ENCODE measurements at regions of chr17 and their contacts with region 1.

Region 1: DNA sequence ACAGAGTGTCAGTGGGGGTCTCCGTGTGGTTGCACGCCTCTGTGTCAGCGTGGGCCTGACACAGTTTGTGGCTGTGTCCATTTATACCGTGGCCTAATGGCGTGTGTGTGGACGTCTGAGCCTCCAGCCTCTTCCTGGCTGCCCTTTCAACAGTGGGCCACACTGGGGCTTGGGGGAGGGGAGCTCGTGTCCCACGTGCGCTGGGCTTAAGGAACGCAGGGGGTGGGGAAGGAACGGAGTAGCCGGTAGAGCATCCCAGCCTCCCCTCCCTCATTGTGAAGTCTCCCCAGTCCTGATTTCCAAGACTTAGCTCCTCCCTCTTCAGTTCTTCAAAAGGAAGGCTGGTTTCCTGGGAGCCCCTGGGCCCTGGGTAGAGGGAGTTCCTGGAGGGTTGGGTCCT is 9.5 kb upstream of the HES7 start:
- DNase-seq: no peak
- H3K4me3 ChIP-seq: no peak overlapping the region
- H3K27me3 ChIP-seq: no peaks in the 10 kb centered on the region
- CTCF ChIP-seq: no peak

Region 2: DNA sequence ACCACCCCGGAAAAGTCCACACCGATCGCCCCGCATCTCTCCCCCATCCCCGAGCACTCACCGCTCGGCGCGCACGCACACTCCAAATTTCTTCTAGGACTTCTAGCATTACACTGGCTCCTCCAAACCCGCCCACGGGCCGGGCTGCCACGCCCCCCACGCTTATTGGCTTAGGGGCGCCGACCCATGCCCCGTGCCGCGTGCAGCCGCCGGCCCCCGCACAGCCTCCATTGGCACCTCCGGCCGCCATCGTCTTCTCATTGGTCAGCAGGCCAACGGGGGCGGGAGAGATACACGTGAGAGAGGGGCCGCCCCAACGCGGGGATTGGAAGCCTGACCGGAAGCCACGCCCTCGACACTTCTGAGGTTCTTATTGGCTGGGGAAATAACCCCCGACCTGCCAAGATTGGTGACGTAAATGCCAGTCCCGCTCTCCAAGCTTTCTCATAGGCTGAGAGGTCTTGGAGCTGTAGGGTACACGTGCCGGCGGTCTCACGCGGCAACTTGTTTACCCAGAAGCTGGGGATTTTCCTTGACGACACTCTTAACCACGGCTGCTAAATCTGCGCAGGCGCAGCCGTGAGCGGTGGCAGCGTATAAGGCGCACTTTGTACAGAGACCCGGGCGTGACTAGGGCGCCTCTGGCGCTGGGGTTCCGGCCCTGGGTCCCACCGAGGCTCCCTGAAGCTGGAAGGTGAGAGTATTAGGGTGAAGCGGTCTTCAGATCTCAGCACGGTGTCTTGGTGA is 23.0 kb after region 1 on chr17:
- CTCF ChIA-PET with region 1: interaction called, 31 read pairs
- POLR2A ChIA-PET with region 1: interaction called, 6 read pairs
- DNase-seq: peak; percentile 100
- H3K4me3 ChIP-seq: peak overlapping the region; percentile 48
- H3K27me3 ChIP-seq: no peaks in the 10 kb centered on the region
- CTCF ChIP-seq: 0 out of 2 replicates have a peak, but pooled peaks have one; percentile 7

Region 3: GRCh38 chr17:8212312-8213180 is 79.1 kb after region 1 on chr17:
- CTCF ChIA-PET with region 1: no interaction called
- POLR2A ChIA-PET with region 1: no interaction called
- DNase-seq: no peak
- H3K4me3 ChIP-seq: no peak overlapping the region
- H3K27me3 ChIP-seq: no peaks in the 10 kb centered on the region
- CTCF ChIP-seq: no peak